ENCODE measurements at regions of chrX and their contacts with region 1.

Region 1: DNA sequence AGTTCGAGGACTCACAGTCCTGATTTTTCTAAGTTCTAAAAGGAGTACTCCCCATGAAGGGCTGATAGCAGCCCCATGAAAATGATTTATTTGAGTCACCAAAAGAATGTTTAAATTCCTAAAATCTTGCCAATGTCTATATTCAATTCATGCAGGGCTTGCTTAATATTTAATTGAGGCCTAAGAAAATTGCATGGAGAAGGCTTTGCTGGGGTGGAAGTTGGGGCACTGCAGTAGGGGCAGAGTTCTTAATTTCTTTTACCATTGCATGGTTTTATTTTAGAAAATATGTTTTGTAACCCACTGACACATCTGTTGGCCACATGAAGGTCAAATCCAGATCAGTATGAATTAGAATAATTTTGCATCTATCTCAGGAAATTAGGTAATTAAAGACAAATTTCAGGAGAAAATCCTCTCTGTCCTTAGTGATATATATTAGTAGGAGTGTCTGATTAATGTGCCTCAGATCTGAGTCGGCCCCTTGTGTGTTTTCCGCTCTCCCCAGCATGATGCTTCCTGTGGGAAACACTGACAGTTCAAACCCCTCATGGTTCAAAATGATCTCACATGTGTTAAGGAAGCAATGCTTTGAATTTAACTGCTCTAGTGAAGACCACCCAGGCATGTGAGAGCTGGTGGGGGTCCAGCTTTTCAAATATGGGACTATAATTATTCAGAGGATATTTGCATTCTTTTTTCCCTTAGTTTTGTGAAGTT is 54.0 kb upstream of the EGFL6 start:
- DNase-seq: no peak
- ATAC-seq: no peak
- H3K4me3 ChIP-seq: no peak overlapping the region
- H3K27ac ChIP-seq: no peak overlapping the region
- H3K4me1 ChIP-seq: no peaks in the 10 kb centered on the region
- H3K27me3 ChIP-seq: no peaks in the 10 kb centered on the region
- CTCF ChIP-seq: no peak
- EP300 ChIP-seq: no peak
- POLR2A ChIP-seq: no peak
- RAD21 ChIP-seq: no peak

Region 2: GRCh38 chrX:13345037-13345436 is 170.3 kb before region 1 on chrX:
- CTCF ChIA-PET with region 1: no interaction called
- POLR2A ChIA-PET with region 1: no interaction called
- RAD21 ChIA-PET with region 1: no interaction called
- SMC1A ChIA-PET with region 1: no interaction called
- in situ Hi-C with region 1: no loop called
- intact Hi-C with region 1: no loop called
- DNase-seq: peak; percentile 34
- ATAC-seq: peak; percentile 79
- H3K4me3 ChIP-seq: no peak overlapping the region
- H3K27ac ChIP-seq: 0 out of 2 replicates have a peak overlapping the region, but pooled peaks have one; percentile 2
- H3K4me1 ChIP-seq: peaks cover 3% of the 10 kb centered on the region; the same call in 1 of the 2 replicates
- H3K27me3 ChIP-seq: no peaks in the 10 kb centered on the region
- CTCF ChIP-seq: no peak
- EP300 ChIP-seq: no peak
- POLR2A ChIP-seq: no peak
- RAD21 ChIP-seq: no peak

Region 3: DNA sequence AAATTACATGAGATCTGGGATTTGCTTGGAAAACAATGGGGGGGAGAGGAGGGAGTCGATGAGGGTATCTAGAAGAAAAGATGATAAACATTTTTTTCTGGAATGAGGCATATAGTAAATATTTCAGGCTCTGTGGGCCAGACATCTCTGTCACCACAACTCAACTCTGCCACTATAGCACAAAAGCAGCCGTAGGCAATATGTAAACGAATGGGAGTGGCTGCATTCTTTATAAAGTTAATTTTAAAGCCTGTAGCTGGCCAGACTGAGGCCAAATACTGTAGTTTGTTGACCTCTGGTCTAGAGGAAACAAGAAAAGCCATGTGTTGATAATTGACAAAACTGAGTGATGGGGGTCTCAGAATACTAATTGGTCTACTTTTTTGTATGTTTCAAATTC is 123.5 kb after region 1 on chrX:
- CTCF ChIA-PET with region 1: interaction called, 143 read pairs
- POLR2A ChIA-PET with region 1: no interaction called
- RAD21 ChIA-PET with region 1: no interaction called
- SMC1A ChIA-PET with region 1: interaction called, 86 read pairs
- in situ Hi-C with region 1: loop called (anchors 5 kb)
- intact Hi-C with region 1: no loop called
- DNase-seq: no peak
- ATAC-seq: no peak
- H3K4me3 ChIP-seq: no peak overlapping the region
- H3K27ac ChIP-seq: no peak overlapping the region
- H3K4me1 ChIP-seq: no peaks in the 10 kb centered on the region
- H3K27me3 ChIP-seq: no peaks in the 10 kb centered on the region; a peak in 1 of 4 replicates
- CTCF ChIP-seq: no peak
- EP300 ChIP-seq: no peak
- POLR2A ChIP-seq: no peak
- RAD21 ChIP-seq: no peak